ENCODE measurements at regions of chr16 and their contacts with region 1.

Region 1: GRCh38 chr16:11972128-11972527 is 4.4 kb upstream of the SNX29 start:
- DNase-seq: peak in 1 of 4 experiments; percentile 41
- ATAC-seq: peak; percentile 32; the same call in 2 of the 3 replicates
- H3K4me3 ChIP-seq: no peak overlapping the region
- H3K27ac ChIP-seq: no peak overlapping the region
- H3K4me1 ChIP-seq: peaks cover 0 to 19% of the 10 kb centered on the region in 2 experiments; a peak in 3 of 5 replicates
- H3K27me3 ChIP-seq: no peaks in the 10 kb centered on the region
- CTCF ChIP-seq: peak; percentile 29 to 59 (median 42); a peak in 3 of 6 replicates
- EP300 ChIP-seq: no peak
- POLR2A ChIP-seq: no peak
- RAD21 ChIP-seq: peak; percentile 36 to 59; a peak in 3 of 4 replicates

Region 2: GRCh38 chr16:11546608-11547061 is 425.5 kb before region 1 on chr16:
- CTCF ChIA-PET with region 1: no interaction called
- POLR2A ChIA-PET with region 1: no interaction called
- in situ Hi-C with region 1: no loop called
- intact Hi-C with region 1: no loop called
- DNase-seq: no peak
- ATAC-seq: no peak
- H3K4me3 ChIP-seq: no peak overlapping the region
- H3K27ac ChIP-seq: no peak overlapping the region
- H3K4me1 ChIP-seq: no peaks in the 10 kb centered on the region
- H3K27me3 ChIP-seq: peaks cover 31 to 53% of the 10 kb centered on the region in 2 experiments
- CTCF ChIP-seq: no peak
- EP300 ChIP-seq: no peak
- POLR2A ChIP-seq: no peak
- RAD21 ChIP-seq: no peak

Region 3: DNA sequence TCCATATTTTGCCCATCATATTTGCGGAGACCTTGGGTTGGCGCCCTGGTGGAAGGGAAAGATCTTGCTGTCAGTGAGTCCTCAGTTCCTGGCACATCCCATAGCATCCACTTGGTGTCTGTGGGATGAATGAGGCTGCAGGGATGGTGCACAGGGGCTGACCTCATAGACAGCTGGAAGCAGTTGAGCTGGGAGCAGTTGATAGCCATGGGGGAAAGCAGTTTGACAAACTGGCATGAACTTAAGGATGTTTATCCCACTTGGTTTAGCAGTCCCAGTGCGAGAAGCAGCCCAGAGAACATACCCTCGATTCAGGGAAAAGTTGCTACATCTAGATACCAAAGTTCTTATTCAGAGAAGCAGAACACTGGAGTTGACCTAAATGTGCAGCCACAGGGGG is 85.1 kb after region 1 on chr16:
- CTCF ChIA-PET with region 1: interaction called, 3 read pairs
- POLR2A ChIA-PET with region 1: interaction called, 5 read pairs
- in situ Hi-C with region 1: loop called (anchors 5 kb)
- intact Hi-C with region 1: no loop called
- DNase-seq: no peak
- ATAC-seq: no peak
- H3K4me3 ChIP-seq: no peak overlapping the region
- H3K27ac ChIP-seq: no peak overlapping the region
- H3K4me1 ChIP-seq: peaks cover 5 to 8% of the 10 kb centered on the region in 2 experiments; a peak in 4 of 5 replicates
- H3K27me3 ChIP-seq: no peaks in the 10 kb centered on the region
- CTCF ChIP-seq: no peak
- EP300 ChIP-seq: no peak
- POLR2A ChIP-seq: no peak
- RAD21 ChIP-seq: no peak